Sciatic nerve (tissue), 2 donors: ENCODE measurements at regions of chr19 and their contacts with region 1.

Region 1: DNA sequence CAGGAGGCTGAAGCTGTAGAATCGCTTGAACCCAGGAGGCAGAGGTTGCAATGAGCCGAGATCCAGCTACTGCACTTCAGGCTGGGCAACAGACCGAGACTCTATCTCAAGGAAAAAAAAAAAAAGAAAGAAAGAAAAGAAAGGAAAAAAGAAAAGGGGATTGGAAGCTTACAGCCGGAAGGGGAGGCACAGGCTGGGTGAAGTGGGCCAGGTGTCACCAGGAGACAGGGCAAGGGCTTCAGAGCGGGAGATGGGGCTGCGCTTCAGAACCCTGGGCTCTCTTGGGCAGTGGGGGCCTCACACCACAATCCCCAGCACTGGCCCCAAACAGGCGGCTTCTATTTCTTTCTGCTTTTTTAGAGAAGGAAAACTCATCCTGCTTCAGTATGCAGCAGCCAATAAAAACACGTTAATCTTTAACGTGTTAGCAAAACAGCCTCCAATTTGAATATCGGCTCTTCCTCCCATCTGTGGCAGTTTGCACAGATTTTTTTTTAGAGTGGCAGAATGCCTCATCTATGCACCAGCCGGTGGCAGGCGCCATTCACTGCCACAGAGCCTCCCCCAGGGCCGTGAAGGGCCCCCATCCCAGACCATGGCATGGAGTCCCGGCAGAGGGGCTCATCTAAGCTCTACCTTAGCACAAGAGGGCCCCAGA is 46.6 kb upstream of the C19orf12 start:
- DNase-seq: no peak
- ATAC-seq: no peak

Region 2: GRCh38 chr19:28586474-28586873 is 1175.2 kb before region 1 on chr19:
- intact Hi-C with region 1: loop called (anchors 5 kb)
- DNase-seq: no peak
- ATAC-seq: no peak

Region 3: DNA sequence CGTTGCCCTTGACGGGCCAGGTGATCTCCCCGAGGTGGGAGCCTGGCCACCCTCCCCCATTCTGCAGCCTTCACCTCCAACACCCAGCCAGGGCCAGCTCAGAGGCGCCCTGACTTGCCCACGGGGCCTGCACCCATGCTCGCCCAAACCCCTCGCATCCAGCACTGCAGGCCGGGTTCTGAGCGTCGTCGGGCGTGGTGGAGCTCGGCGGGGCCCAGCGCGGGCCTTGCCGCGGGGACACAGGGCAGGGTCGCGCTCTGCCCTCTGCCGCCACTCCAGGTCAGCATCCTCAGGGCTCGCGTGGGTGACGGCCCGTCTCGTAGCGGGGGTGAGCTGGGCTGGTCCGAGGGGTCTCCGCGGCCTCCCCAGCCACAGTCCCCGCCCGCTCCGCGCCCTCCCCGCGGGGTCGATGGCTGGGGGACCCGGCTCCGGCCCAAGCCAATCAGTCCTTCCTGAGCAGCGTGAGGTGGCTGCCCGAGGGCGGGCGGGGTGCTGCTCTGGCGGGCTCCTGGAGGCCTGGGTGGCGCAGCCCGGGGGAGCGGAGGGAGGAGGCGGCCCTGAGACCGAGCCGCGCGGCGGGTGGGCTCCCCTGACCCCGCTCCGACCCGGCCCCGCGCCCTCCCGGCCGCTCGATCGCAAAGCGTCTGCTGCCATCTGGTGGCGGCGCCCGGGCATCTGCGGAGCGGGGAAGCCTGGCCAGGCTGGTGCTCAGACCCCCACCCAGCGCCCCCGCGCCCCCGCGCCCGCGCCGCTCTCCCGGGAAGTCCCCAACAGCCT is 111.5 kb after region 1 on chr19:
- intact Hi-C with region 1: loop called (anchors 5 kb)
- DNase-seq: peak; percentile 80
- ATAC-seq: peak; percentile 67

Region 4: GRCh38 chr19:30556230-30556711 is 794.6 kb after region 1 on chr19:
- intact Hi-C with region 1: no loop called
- DNase-seq: no peak
- ATAC-seq: no peak